Heart left ventricle (tissue), 16 donors: ENCODE measurements at regions of chr13 and their contacts with region 1.

Region 1: DNA sequence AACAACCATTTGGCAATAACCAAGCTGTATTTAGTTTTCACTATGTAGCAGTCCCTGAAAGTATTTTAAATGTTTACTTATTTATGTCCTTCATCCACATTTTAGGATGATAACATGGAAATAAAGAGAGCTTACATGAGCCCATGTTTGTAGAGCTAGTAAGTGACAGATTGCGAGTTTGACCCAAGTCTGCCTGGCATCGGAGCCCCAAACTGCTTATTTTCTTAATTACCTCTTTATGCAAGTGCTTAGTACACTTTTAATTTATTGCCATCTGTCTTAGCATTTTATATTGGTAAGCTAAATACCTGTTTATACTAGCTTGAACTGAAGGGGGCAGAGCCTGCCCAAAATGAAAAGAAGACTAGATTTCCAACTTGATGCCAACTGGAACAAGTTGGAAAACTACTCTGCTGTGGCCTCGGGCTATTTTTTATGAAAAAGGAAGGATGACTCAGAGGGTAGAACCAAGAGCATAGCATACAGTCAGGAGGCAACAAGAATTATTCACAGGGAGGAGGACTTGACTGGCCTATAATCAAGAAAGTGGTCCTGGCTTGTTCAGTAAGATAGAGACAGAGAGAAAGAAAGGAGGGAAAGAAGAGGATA is 150.2 kb downstream of the NDFIP2 start:
- DNase-seq: peak in 1 of 5 donors; percentile 10
- ATAC-seq: peak in 3 of 4 donors; percentile 82 to 91 (median 90)
- H3K4me3 ChIP-seq: no peak overlapping the region
- H3K27ac ChIP-seq: peak overlapping the region in 2 of 12 donors; percentile 5 to 12
- H3K4me1 ChIP-seq: peaks cover 0 to 11% (median 0%) of the 10 kb centered on the region in 12 donors
- H3K27me3 ChIP-seq: no peaks in the 10 kb centered on the region
- CTCF ChIP-seq: peak in 10 of 12 donors; percentile 24 to 54 (median 38)
- POLR2A ChIP-seq: no peak

Region 2: GRCh38 chr13:79560953-79561352 is 70.2 kb before region 1 on chr13:
- intact Hi-C with region 1: no loop called
- DNase-seq: no peak
- ATAC-seq: peak in 1 of 4 donors; percentile 29
- H3K4me3 ChIP-seq: no peak overlapping the region
- H3K27ac ChIP-seq: no peak overlapping the region
- H3K4me1 ChIP-seq: no peaks in the 10 kb centered on the region
- H3K27me3 ChIP-seq: no peaks in the 10 kb centered on the region
- CTCF ChIP-seq: no peak
- POLR2A ChIP-seq: no peak

Region 3: GRCh38 chr13:79703772-79704171 is 72.6 kb after region 1 on chr13:
- intact Hi-C with region 1: no loop called
- DNase-seq: no peak
- ATAC-seq: no peak
- H3K4me3 ChIP-seq: no peak overlapping the region
- H3K27ac ChIP-seq: no peak overlapping the region
- H3K4me1 ChIP-seq: no peaks in the 10 kb centered on the region
- H3K27me3 ChIP-seq: no peaks in the 10 kb centered on the region
- CTCF ChIP-seq: no peak
- POLR2A ChIP-seq: no peak

Region 4: DNA sequence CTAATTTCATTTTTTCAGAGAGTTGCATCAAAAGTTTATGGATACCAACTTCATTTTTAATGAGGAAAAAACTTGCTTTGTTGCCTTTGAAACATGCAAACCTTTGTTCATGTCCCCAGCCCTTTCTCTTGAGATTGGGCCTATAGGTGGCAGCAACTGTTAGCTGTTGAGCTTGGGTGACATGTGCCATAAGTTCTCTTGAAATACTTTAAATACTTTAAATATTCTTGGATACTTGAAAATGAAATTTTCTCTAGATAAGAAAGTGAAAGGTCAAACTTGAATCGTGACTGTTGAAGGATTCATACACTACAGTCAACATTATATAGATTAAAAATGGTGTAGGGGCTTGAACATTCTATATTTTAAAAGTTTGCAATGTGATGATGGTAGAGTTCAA is 144.7 kb after region 1 on chr13:
- intact Hi-C with region 1: loop called in 4 of 10 experiments (anchors 10 kb)
- DNase-seq: peak in 2 of 5 donors; percentile 17 to 37
- ATAC-seq: peak in 3 of 4 donors; percentile 61 to 70 (median 69)
- H3K4me3 ChIP-seq: no peak overlapping the region
- H3K27ac ChIP-seq: no peak overlapping the region
- H3K4me1 ChIP-seq: peaks cover 0 to 24% (median 4%) of the 10 kb centered on the region in 12 donors
- H3K27me3 ChIP-seq: no peaks in the 10 kb centered on the region
- CTCF ChIP-seq: peak in 11 of 12 donors; percentile 44 to 75 (median 60)
- POLR2A ChIP-seq: no peak

Region 5: DNA sequence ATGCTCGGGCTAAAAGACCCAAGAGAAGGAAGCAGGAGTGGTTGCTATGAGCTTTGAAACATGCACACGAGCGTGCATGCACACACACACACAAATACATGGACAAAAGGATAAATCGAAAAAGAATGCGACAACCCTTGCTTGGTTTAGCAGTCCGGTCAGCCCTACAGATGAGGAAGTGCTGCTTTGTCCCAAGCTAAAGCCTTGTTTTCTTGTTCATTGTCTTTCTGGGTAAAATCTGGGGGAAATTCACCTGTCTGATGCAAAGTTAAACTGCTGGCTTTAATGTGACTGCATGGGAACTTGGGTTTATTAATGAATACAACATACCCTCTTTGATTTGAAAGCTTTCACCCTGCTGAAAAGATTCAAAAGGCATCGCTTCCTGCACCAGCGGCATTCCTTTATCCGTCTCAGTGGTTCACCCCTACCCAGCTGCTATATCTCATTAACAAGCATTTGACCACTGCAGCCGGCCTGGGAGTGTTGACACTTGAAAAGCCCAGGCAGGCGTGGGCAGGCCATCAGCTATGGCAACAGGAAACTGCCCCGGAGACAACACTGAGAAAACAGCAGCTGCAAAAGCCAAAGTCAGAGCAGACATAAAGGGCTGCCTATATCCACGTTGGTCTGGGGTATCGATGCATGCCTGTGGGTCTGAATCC is 151.5 kb after region 1 on chr13:
- intact Hi-C with region 1: loop called in 4 of 10 experiments (anchors 10 kb)
- DNase-seq: peak; percentile 62 to 88 (median 73)
- ATAC-seq: peak; percentile 96 to 99 (median 98)
- H3K4me3 ChIP-seq: peak overlapping the region in 2 of 12 donors; percentile 12 to 15
- H3K27ac ChIP-seq: peak overlapping the region in 7 of 12 donors; percentile 9 to 47 (median 25)
- H3K4me1 ChIP-seq: peaks cover 0 to 29% (median 9%) of the 10 kb centered on the region in 12 donors
- H3K27me3 ChIP-seq: no peaks in the 10 kb centered on the region
- CTCF ChIP-seq: no peak
- POLR2A ChIP-seq: no peak